Dendritic cell treated with granulocyte-macrophage colony-stimulating factor and Interleukin-4, amounts not matched to agents 40 ng/mL and 50 ng/mL, for 4 days (primary cell): ENCODE measurements at regions of chr17 and their contacts with region 1.

Region 1: DNA sequence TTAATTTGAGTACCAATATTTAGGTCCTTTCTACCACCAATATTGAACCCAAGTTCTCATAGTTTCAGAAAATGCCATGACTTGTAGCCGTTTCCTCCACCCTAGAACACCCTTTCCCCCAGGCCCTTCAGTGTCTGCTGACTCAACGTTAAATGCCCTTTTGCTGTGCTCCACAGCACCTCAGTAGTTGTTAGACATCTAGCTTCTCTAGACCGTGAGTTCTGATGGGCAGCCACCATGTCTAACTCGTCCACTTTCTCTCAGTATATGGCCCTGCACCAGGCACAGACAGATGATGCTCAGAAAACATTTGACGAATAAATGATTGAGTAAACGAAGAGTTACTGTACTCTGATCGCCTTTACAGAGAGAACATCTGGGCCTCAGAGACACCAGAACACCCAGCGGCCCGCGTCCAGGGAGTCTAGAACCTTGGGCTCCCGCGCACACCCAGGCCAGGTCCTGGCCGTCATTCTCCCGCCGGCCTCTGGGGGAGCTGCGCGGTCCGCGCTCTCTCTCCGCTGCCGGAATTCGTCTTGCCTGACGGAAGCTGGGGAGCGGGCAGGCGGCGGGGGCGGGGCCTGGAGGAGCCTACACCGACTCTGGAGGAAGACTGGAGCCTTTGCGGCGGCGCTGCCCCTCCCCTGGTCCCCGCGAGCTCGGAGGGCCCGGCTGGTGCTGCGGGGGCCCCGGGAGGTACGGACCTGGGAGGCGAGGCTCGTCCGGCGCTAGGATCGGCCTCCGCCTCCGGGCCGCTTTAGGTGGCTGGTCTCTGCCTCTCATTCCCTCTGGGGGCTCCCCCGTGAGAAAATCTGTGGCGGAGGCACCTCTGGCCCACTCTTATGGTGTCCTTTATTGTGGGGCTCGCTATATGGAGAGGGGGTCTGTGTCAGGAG is at the start of gene NKIRAS2:
- H3K4me3 Mint-ChIP-seq: peak within 1 kb of the TSS; percentile 82
- H3K27ac Mint-ChIP-seq: peak within 1 kb of the TSS; percentile 85
- H3K4me1 Mint-ChIP-seq: peaks cover 78% of the 10 kb centered on the region
- H3K27me3 Mint-ChIP-seq: no peaks in the 10 kb centered on the region

Region 2: DNA sequence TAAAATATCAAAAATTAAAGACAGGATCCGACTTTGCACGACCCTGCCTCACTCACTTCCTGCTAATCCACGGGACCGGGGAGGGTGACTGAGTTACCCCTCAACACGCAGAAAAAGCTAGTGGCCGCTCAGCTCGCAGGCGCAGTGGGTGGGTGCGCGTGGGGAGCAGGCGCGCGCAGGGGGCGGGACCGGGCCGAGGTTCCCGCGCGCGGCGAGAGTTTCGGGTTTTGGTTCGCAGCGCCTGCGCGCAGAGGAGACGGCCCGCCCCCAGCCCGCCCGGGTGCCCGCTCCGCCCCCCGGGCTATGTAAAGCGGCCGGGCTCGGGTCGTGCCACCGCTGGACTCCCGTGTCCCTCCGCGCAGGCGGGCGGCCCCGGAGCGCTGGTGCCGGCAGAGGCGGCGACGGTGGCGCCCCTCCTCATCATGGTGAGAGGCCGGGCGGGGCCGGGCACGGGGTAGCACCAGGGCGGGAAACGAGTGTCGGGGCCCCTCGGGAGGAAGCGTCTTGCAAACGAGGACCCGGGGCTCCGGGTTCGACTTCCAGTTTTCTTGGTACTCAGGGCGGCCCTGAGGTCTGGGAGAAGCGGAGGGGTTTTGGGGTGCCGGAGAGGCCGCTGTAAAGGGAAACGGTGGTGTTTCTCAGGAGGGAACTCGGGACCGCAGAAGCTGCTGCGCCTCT is 53.2 kb before region 1 on chr17 and contains the start of gene CNP:
- intact Hi-C with region 1: loop called (anchors 2 kb)
- H3K4me3 Mint-ChIP-seq: peak within 1 kb of the TSS; percentile 76
- H3K27ac Mint-ChIP-seq: peak within 1 kb of the TSS; percentile 36
- H3K4me1 Mint-ChIP-seq: peaks cover 47% of the 10 kb centered on the region
- H3K27me3 Mint-ChIP-seq: peaks cover 4% of the 10 kb centered on the region

Region 3: GRCh38 chr17:42112552-42113176 is 92.9 kb after region 1 on chr17 and contains the start of gene DHX58:
- intact Hi-C with region 1: loop called (anchors 2 kb)
- H3K4me3 Mint-ChIP-seq: peak within 1 kb of the TSS; percentile 73
- H3K27ac Mint-ChIP-seq: peak within 1 kb of the TSS; percentile 93
- H3K4me1 Mint-ChIP-seq: peaks cover 64% of the 10 kb centered on the region
- H3K27me3 Mint-ChIP-seq: no peaks in the 10 kb centered on the region

Region 4: DNA sequence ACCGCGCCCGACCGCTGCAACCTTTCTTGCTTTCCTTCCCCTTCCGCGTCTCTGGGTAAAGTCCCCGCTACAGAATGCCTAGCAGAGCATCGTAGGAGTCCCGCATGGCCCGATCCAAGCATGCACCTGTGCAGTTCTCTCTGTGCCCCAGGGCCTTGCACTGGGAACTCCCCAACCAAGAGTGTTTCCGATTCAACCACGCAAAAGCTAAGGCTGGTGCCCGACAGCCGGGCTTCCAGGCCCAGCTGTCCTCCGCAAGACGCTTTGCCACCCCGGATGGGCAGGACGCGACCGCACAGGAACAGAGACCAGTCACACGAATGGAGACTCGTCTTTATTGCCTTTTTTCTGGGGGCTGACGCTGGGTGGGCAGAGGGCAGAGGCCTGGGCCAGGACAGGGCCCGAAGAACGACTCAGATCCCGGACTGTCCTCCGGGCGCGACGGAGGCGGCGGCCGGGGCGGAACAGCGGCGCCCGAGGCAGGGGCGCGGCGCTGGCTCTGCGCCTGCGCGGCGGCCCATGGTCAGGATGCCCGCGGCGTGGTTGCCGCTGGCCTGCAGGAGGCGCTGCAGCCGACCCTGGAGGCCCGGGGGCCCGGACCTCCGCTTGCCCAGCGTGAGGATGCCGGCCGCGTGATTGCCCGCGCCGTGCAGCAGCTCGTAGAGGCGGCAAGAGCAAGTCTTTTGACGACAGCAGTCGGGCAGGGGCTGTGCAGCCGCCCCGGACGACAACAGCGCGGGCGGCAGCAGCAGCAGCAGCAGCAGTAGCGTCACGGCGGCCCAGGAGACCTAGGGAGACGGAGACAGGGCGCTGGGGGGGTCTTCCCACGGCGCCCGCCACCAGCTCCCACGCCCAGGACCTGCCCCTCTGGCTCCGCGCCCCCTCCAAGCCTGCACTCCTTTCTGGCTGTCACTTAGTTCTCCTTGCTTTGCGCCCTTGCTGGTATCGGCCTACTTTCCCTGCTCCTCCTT is 164.3 kb after region 1 on chr17:
- intact Hi-C with region 1: loop called (anchors 5 kb)
- H3K4me3 Mint-ChIP-seq: peak overlapping the region; percentile 81
- H3K27ac Mint-ChIP-seq: peak overlapping the region; percentile 96
- H3K4me1 Mint-ChIP-seq: peaks cover 95% of the 10 kb centered on the region
- H3K27me3 Mint-ChIP-seq: peaks cover 25% of the 10 kb centered on the region

Region 5: GRCh38 chr17:42287926-42288802 is 268.4 kb after region 1 on chr17 and contains the start of gene STAT5A:
- intact Hi-C with region 1: loop called (anchors 10 kb)
- H3K4me3 Mint-ChIP-seq: peak within 1 kb of the TSS; percentile 91
- H3K27ac Mint-ChIP-seq: peak within 1 kb of the TSS; percentile 93
- H3K4me1 Mint-ChIP-seq: peaks cover 71% of the 10 kb centered on the region
- H3K27me3 Mint-ChIP-seq: no peaks in the 10 kb centered on the region